ENCODE measurements at regions of chr9 and their contacts with region 1.

Region 1: GRCh38 chr9:88991066-88992034 is at the start of gene S1PR3:
- DNase-seq: no peak
- H3K4me3 ChIP-seq: peak within 1 kb of the TSS; percentile 86 to 100 (median 97)
- H3K27ac ChIP-seq: peak within 1 kb of the TSS; percentile 97 to 100 (median 99)
- H3K4me1 ChIP-seq: peaks cover 28 to 64% (median 60%) of the 10 kb centered on the region in 4 donors
- H3K27me3 ChIP-seq: peaks cover 0 to 4% (median 0%) of the 10 kb centered on the region in 4 donors
- CTCF ChIP-seq: peak in 1 of 3 experiments; percentile 31
- EP300 ChIP-seq: no peak
- POLR2A ChIP-seq: no peak
- total RNA-seq, gene S1PR3: 184 to 340 (median 223) TPM

Region 2: DNA sequence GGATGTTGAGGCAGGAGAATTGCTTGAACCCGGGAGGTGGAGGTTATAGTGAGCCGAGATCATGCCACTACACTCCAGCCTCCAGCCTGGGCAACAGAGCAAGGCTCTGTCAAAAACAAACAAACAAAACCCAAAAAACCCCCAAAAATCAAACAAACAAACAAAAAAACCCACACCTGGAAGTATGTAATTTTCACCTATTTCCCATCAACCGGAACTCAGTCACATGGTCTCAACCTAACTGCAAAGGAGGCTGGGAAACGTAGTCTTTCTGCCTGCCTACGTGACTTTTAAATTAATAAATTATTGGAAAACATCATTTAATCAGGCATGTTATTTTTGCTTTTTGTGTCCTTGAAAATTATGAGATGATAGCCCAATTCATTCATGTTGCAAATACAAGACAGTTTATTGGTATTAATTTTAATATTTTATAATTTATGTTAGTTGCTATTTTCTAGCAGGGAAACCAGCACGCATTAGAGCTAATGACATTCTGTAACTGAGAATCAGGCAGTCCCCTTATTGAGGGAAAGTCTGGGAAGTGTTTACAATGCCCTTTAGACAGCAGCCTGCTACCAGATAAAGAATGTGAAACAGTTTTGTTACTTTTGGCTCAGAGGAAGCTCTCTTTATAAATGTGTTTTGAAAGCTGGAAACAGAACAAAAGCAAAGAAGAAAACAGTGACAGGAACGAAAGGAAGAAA is 346.0 kb before region 1 on chr9:
- intact Hi-C with region 1: loop called (anchors 5 kb)
- DNase-seq: no peak
- H3K4me3 ChIP-seq: peak overlapping the region in 2 of 4 donors; percentile 0 to 22
- H3K27ac ChIP-seq: peak overlapping the region; percentile 61 to 79 (median 67)
- H3K4me1 ChIP-seq: peaks cover 0 to 30% (median 20%) of the 10 kb centered on the region in 4 donors
- H3K27me3 ChIP-seq: no peaks in the 10 kb centered on the region
- CTCF ChIP-seq: no peak
- EP300 ChIP-seq: no peak
- POLR2A ChIP-seq: no peak

Region 3: DNA sequence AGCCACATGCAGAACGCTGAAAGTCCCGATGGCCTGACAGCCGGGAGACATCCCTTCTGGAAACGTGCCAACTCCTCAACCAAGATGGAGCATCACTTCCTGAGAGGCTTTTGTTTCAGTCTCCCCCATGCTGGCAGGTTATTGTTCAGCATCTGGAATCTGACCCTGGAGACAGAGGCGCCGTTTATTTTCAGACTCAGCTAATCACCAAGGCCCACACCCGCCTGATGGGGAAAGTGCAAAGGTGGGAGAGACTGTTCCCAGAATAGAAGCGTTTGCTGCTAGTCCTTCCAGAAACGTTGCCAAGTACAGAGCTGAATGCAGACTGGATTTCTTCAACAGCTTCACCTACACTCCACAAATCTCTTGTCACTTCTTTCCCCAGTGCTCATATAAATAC is 41.9 kb before region 1 on chr9:
- intact Hi-C with region 1: loop called (anchors 5 kb)
- DNase-seq: peak; percentile 92
- H3K4me3 ChIP-seq: no peak overlapping the region
- H3K27ac ChIP-seq: peak overlapping the region; percentile 69 to 92 (median 80)
- H3K4me1 ChIP-seq: peaks cover 38 to 75% (median 67%) of the 10 kb centered on the region in 4 donors
- H3K27me3 ChIP-seq: no peaks in the 10 kb centered on the region
- CTCF ChIP-seq: no peak
- EP300 ChIP-seq: peak; percentile 64
- POLR2A ChIP-seq: no peak

Region 4: DNA sequence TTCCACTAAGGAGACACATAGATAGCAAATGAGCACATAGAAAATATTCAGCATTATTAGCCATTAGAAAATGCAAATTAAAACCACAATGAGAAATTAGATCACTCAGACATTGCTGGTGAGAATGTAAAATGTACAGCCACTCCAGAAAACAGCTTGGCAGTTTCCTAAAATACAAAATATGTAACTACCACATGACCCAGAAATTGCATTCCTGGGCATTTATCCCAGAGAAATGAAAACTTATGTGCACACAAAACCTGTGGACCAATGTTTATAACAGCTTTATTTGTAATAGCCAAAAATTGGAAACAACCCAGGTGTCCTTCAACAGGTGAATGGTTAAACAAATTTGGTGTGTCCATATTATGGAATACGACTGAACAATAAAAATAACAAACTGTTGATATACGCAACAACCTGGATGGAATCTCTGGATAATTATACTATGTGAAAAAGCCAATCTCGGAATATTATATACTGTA is 222.1 kb after region 1 on chr9:
- intact Hi-C with region 1: no loop called
- DNase-seq: no peak
- H3K4me3 ChIP-seq: no peak overlapping the region
- H3K27ac ChIP-seq: no peak overlapping the region
- H3K4me1 ChIP-seq: peaks cover 0 to 17% (median 10%) of the 10 kb centered on the region in 4 donors
- H3K27me3 ChIP-seq: no peaks in the 10 kb centered on the region
- CTCF ChIP-seq: no peak
- EP300 ChIP-seq: no peak
- POLR2A ChIP-seq: no peak

Measured in esophagus muscularis mucosa (tissue), 4 donors.